ENCODE measurements at regions of chr7 and their contacts with region 1.

Region 1: GRCh38 chr7:82740246-82740848 is 296.8 kb upstream of the CACNA2D1 start:
- DNase-seq: no peak
- H3K4me3 ChIP-seq: no peak overlapping the region
- H3K27ac ChIP-seq: no peak overlapping the region
- H3K27me3 ChIP-seq: no peaks in the 10 kb centered on the region
- CTCF ChIP-seq: peak; percentile 87

Region 2: GRCh38 chr7:82631998-82632397 is 108.3 kb before region 1 on chr7:
- CTCF ChIA-PET with region 1: no interaction called
- POLR2A ChIA-PET with region 1: no interaction called
- DNase-seq: no peak
- H3K4me3 ChIP-seq: no peak overlapping the region
- H3K27ac ChIP-seq: no peak overlapping the region
- H3K27me3 ChIP-seq: no peaks in the 10 kb centered on the region
- CTCF ChIP-seq: no peak

Region 3: DNA sequence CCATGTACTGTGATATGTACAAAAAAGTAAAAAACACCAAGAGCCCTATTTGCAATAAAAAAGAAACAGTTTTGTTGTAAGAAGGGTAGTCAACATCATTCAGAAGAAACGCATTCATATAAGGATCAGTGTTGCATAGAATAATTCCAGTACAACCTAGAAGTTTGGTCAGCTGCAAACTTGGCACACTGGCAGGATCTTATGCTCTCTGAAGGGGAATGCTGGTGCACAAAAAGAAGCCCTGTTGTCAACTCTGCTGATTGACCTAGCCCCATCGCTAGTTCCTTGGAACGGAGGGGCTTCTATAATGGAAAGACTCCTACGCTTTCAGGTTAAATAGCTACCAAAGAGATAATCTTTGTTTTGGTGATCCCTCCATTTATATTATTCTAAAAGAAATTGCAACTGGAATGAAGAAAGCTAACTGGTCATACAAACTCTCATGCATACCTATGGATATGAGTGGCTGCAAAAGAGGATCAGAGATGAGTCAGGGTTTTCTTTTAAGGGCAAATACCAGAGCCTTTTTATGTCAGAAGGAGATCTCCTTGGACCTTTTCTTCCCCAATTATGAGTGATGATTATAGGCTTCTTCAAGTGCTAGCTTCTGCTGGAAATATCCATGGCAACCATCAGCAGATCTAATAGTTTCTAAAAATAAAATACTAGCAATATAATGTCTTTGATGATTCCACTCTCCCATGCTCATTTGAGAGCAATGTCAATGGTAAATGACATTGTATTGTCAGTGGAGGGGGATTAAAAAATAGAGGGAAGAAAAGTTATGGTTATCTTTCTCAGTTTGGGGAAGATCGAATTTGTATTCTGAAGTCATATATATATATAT is 15.6 kb after region 1 on chr7:
- CTCF ChIA-PET with region 1: interaction called, 13 read pairs
- POLR2A ChIA-PET with region 1: no interaction called
- DNase-seq: peak; percentile 21
- H3K4me3 ChIP-seq: no peak overlapping the region
- H3K27ac ChIP-seq: no peak overlapping the region
- H3K27me3 ChIP-seq: no peaks in the 10 kb centered on the region
- CTCF ChIP-seq: no peak

Region 4: GRCh38 chr7:82778021-82778420 is 37.7 kb after region 1 on chr7:
- CTCF ChIA-PET with region 1: interaction called, 11 read pairs
- POLR2A ChIA-PET with region 1: no interaction called
- DNase-seq: no peak
- H3K4me3 ChIP-seq: no peak overlapping the region
- H3K27ac ChIP-seq: no peak overlapping the region
- H3K27me3 ChIP-seq: no peaks in the 10 kb centered on the region
- CTCF ChIP-seq: no peak